Right ventricle myocardium inferior (tissue), 1 donor: ENCODE measurements at regions of chr12 and their contacts with region 1.

Region 1: GRCh38 chr12:119369907-119370546 is 35.5 kb downstream of the CCDC60 start:
- DNase-seq: no peak
- ATAC-seq: no peak

Region 2: DNA sequence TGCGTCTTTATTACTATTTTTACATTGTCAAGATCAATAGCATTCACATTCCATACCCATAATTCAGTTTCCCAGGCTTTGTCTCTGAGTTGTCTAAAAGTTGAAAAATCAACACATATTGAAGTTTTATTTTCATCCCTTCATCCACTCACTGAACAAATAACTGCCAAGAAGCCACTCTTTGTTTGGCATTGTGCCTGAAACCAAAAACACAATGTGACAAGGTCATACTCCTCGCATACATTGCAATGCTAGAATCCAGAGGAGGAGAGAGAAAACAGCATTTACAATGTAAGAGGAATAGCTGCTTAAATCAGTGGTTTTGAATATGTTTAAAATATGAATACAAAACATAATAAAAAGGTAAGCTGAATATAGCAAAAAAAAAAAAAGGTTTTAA is 36.3 kb after region 1 on chr12:
- intact Hi-C with region 1: loop called (anchors 5 kb)
- DNase-seq: no peak
- ATAC-seq: peak; percentile 37

Region 3: DNA sequence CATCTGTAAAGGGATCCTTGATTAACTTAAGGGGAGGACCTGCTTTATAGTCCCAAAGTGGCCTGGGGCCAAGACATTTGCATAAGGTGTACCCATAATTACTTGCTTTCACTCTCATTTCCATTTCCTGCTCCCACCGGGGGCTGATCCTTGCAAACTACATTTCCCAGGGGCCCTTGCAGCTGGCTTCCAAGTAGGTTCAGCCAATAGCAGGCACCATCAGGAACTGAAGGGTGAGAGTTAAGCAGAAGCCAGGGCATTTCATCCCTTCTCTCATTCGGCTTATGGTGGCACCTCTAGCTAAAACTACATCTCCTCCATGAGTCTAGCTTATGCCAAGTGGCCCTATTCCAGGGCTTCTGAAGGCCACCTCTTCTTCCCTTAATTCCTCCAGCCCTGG is 53.3 kb after region 1 on chr12:
- intact Hi-C with region 1: no loop called
- DNase-seq: no peak
- ATAC-seq: no peak

Region 4: GRCh38 chr12:119512772-119513497 is 142.9 kb after region 1 on chr12:
- intact Hi-C with region 1: no loop called
- DNase-seq: no peak
- ATAC-seq: no peak